Thyroid gland (tissue), 4 donors: ENCODE measurements at regions of chr16 and their contacts with region 1.

Region 1: DNA sequence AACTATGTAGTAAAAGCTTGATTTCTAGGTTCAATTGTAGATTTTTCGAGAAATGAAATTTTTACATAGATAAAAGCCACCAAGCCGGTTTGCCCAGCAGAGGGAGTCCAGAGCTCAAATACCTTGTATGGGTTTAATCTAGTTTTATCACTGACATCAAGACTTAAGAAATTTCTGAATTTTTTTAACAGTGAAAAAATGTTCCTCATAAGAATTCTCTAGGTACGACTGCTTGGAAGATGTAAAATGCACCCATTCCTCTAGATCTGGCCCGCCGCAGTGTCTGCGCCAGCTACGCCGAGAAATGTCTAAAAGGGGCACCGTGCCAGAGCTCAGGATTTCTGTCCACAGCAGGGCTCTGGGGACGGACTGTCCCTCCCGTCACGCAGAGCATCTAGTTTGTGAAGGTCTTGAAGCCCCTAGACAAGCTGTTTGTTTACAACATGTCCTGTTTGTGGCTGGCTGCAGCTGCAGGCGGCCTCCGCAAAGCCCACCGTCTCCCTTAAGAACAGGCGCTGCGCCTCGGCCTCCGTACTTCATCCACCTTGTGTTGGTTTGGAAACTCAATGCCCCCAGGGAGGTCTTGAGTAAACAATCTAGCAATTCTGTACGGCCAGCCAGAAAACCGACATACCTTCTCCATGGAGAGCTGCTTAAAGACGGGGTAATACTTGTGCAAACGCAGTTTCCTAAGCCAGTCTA is 24.8 kb downstream of the MAP1LC3B start:
- DNase-seq: peak; percentile 49 to 50
- H3K4me3 ChIP-seq: no peak overlapping the region
- H3K27ac ChIP-seq: no peak overlapping the region
- H3K4me1 ChIP-seq: no peaks in the 10 kb centered on the region
- H3K27me3 ChIP-seq: no peaks in the 10 kb centered on the region
- CTCF ChIP-seq: peak; percentile 21 to 60 (median 46)
- POLR2A ChIP-seq: no peak

Region 2: DNA sequence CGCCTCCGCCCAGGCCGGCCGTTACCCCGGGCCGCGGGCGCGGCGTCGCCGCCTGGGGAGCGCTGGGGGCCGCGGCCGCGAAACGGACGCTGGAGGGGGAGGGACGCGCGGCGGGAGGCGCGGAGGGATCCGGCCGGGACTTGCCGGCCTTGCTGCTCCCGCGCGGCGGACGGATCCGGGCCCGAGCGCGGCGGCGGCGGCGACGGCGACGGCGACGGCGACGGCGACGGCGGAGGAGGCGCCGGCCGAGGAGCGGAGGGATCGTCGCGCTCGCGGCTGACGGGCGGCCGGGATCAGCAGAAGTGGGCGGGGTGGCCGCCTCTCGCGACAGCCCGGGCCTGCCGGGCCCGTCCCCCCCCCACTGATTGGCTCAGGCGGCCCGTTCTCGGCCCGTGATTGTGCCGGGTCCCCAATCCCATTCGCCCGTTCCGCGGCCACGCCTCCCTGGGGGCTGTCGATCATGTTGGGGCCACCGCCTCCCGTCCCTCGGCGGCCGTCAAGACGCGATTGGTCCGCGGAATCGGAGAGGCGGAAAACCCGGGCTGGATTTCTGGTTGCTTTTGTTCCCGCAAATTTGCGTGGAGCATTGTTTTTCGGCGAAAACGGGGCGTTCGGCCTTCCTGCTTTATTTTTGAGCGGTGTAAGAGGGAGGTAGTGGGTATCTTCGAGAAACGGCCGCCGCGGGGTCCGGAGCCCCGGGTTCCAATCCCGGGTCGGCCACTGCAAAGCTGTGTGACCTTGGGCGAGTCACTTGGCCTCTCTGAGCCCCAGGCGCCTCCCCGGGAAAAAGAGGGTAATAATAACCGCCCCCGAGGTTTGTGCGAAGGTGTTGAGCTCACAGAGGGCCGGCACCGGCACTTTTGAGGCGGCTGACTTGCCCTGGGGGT is 76.0 kb after region 1 on chr16 and contains the start of gene ZCCHC14:
- intact Hi-C with region 1: loop called (anchors 10 kb)
- DNase-seq: peak; percentile 99 to 100
- H3K4me3 ChIP-seq: peak within 1 kb of the TSS in 2 of 3 donors; percentile 20 to 51
- H3K27ac ChIP-seq: peak within 1 kb of the TSS; percentile 32 to 74 (median 52)
- H3K4me1 ChIP-seq: peaks cover 34 to 37% of the 10 kb centered on the region in 2 donors
- H3K27me3 ChIP-seq: no peaks in the 10 kb centered on the region
- CTCF ChIP-seq: no peak
- POLR2A ChIP-seq: peak; percentile 85 to 97
- total RNA-seq, gene ZCCHC14: 23.0 to 70.0 (median 27.6) TPM